GM12878 (cell line): ENCODE measurements at regions of chr2 and their contacts with region 1.

Region 1: GRCh38 chr2:84970868-84971509 is at the start of gene KCMF1:
- DNase-seq: no peak
- ATAC-seq: peak; percentile 41
- H3K4me3 ChIP-seq: peak within 1 kb of the TSS; percentile 85
- H3K27ac ChIP-seq: peak within 1 kb of the TSS; percentile 93
- H3K4me1 ChIP-seq: no peaks in the 10 kb centered on the region
- H3K27me3 ChIP-seq: no peaks in the 10 kb centered on the region
- CTCF ChIP-seq: no peak
- EP300 ChIP-seq: no peak
- POLR2A ChIP-seq: peak; percentile 61
- RAD21 ChIP-seq: no peak
- polyA plus RNA-seq, gene KCMF1: 8.4 to 9.8 TPM

Region 2: GRCh38 chr2:84516234-84516986 is 454.6 kb before region 1 on chr2 and contains the start of gene DNAH6:
- CTCF ChIA-PET with region 1: no interaction called
- POLR2A ChIA-PET with region 1: no interaction called
- RAD21 ChIA-PET with region 1: no interaction called
- SMC1A ChIA-PET with region 1: no interaction called
- in situ Hi-C with region 1: no loop called
- intact Hi-C with region 1: no loop called
- DNase-seq: no peak
- ATAC-seq: peak; percentile 98
- H3K4me3 ChIP-seq: no peak within 1 kb of the TSS
- H3K27ac ChIP-seq: no peak within 1 kb of the TSS
- H3K4me1 ChIP-seq: no peaks in the 10 kb centered on the region
- H3K27me3 ChIP-seq: 0 out of 4 replicates have a peak, but pooled peaks cover 0 to 6% of the 10 kb centered on the region in 2 experiments
- CTCF ChIP-seq: no peak
- EP300 ChIP-seq: no peak
- POLR2A ChIP-seq: no peak
- RAD21 ChIP-seq: no peak
- polyA plus RNA-seq, gene DNAH6: 0.07 to 0.27 TPM

Region 3: GRCh38 chr2:84873350-84873749 is 97.6 kb before region 1 on chr2:
- CTCF ChIA-PET with region 1: no interaction called
- POLR2A ChIA-PET with region 1: no interaction called
- RAD21 ChIA-PET with region 1: no interaction called
- SMC1A ChIA-PET with region 1: no interaction called
- in situ Hi-C with region 1: no loop called
- intact Hi-C with region 1: no loop called
- DNase-seq: no peak
- ATAC-seq: no peak
- H3K4me3 ChIP-seq: no peak overlapping the region
- H3K27ac ChIP-seq: no peak overlapping the region
- H3K4me1 ChIP-seq: no peaks in the 10 kb centered on the region
- H3K27me3 ChIP-seq: no peaks in the 10 kb centered on the region
- CTCF ChIP-seq: no peak
- EP300 ChIP-seq: no peak
- POLR2A ChIP-seq: no peak
- RAD21 ChIP-seq: no peak

Region 4: GRCh38 chr2:84931384-84931821 is 39.6 kb before region 1 on chr2:
- CTCF ChIA-PET with region 1: interaction called, 32 read pairs
- POLR2A ChIA-PET with region 1: interaction called, 12 read pairs
- RAD21 ChIA-PET with region 1: interaction called, 65 read pairs
- SMC1A ChIA-PET with region 1: interaction called, 378 read pairs
- in situ Hi-C with region 1: no loop called
- intact Hi-C with region 1: loop called (anchors 2 kb)
- DNase-seq: peak; percentile 71
- ATAC-seq: peak; percentile 71
- H3K4me3 ChIP-seq: peak overlapping the region; percentile 10; the same call in 1 of the 2 replicates
- H3K27ac ChIP-seq: peak overlapping the region; percentile 95
- H3K4me1 ChIP-seq: peaks cover 12% of the 10 kb centered on the region
- H3K27me3 ChIP-seq: no peaks in the 10 kb centered on the region
- CTCF ChIP-seq: no peak
- EP300 ChIP-seq: peak; percentile 63 to 71; a peak in 3 of 4 replicates
- POLR2A ChIP-seq: no peak
- RAD21 ChIP-seq: no peak

Region 5: GRCh38 chr2:85011747-85012146 is 40.8 kb after region 1 on chr2:
- CTCF ChIA-PET with region 1: interaction called, 14 read pairs
- POLR2A ChIA-PET with region 1: interaction called, 5 read pairs
- RAD21 ChIA-PET with region 1: no interaction called
- SMC1A ChIA-PET with region 1: interaction called, 10 read pairs
- in situ Hi-C with region 1: no loop called
- intact Hi-C with region 1: loop called (anchors 5 kb)
- DNase-seq: no peak
- ATAC-seq: peak; percentile 29; the same call in 2 of the 3 replicates
- H3K4me3 ChIP-seq: no peak overlapping the region
- H3K27ac ChIP-seq: no peak overlapping the region
- H3K4me1 ChIP-seq: peaks cover 32% of the 10 kb centered on the region
- H3K27me3 ChIP-seq: no peaks in the 10 kb centered on the region
- CTCF ChIP-seq: peak in 1 of 3 experiments; percentile 9; a peak in 2 of 6 replicates
- EP300 ChIP-seq: no peak
- POLR2A ChIP-seq: no peak
- RAD21 ChIP-seq: no peak

Region 6: DNA sequence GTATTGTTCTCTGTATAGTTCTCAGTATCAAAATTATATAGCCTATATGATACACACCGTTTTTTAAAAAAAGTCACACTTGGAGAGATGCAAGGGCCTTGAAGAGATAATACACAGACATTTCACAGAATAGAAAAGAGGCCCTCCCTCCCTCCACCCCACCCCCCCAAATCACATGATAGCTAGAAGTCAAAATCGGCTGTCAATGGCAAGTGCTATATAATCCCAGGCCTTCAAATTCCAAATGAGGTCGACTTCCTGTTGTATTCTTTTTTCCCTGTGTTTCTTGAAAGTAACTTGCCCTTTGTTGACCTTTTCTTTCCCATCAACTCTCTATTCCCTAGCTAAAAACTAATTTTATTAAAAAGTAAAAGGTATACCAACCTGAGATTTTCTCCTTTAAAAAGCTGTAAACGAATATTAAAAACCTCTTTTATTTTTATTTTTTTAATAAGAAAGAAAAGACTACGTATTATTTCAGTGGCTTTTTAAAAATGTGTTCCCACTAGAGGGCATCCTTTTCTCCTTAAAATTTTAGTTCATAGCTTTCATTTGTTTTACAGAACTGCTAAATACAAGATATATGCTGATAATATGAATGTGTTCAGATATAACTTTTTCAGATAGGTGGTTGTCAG is 46.5 kb after region 1 on chr2:
- CTCF ChIA-PET with region 1: interaction called, 14 read pairs
- POLR2A ChIA-PET with region 1: no interaction called
- RAD21 ChIA-PET with region 1: interaction called, 5 read pairs
- SMC1A ChIA-PET with region 1: interaction called, 10 read pairs
- in situ Hi-C with region 1: no loop called
- intact Hi-C with region 1: loop called (anchors 5 kb)
- DNase-seq: no peak
- ATAC-seq: 0 out of 3 replicates have a peak, but pooled peaks have one; percentile 20
- H3K4me3 ChIP-seq: no peak overlapping the region
- H3K27ac ChIP-seq: no peak overlapping the region
- H3K4me1 ChIP-seq: peaks cover 13% of the 10 kb centered on the region; the same call in 1 of the 2 replicates
- H3K27me3 ChIP-seq: no peaks in the 10 kb centered on the region
- CTCF ChIP-seq: peak in 2 of 3 experiments; percentile 3 to 23; a peak in 2 of 6 replicates
- EP300 ChIP-seq: no peak
- POLR2A ChIP-seq: no peak
- RAD21 ChIP-seq: no peak